Heart right ventricle (tissue), 16 donors: ENCODE measurements at regions of chr7 and their contacts with region 1.

Region 1: DNA sequence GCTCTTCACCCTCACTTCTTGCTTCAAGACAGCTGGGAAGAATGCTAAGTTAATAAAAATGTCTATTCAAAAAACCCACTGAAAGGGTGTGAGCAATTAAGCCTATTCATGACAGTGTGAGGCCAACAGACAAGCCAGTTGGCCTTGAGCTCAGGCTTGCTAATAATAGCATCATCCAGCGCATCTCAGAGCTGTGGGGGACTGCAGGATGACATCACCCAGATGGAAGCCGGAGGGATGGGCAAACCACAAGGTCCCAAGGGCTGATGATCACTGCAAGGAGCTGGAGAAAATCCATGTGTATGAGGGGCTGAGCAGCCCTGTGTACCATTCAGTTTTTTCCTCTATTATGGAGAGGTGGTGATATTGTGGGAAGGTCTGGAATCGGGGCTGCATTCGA is 770.4 kb downstream of the TNS3 start:
- DNase-seq: peak; percentile 19 to 72
- ATAC-seq: peak; percentile 89 to 97 (median 94)
- H3K4me3 ChIP-seq: no peak overlapping the region
- H3K27ac ChIP-seq: peak overlapping the region in 6 of 10 donors; percentile 32 to 67 (median 52)
- H3K4me1 ChIP-seq: peaks cover 0 to 37% (median 13%) of the 10 kb centered on the region in 9 donors
- H3K27me3 ChIP-seq: no peaks in the 10 kb centered on the region
- CTCF ChIP-seq: no peak

Region 2: DNA sequence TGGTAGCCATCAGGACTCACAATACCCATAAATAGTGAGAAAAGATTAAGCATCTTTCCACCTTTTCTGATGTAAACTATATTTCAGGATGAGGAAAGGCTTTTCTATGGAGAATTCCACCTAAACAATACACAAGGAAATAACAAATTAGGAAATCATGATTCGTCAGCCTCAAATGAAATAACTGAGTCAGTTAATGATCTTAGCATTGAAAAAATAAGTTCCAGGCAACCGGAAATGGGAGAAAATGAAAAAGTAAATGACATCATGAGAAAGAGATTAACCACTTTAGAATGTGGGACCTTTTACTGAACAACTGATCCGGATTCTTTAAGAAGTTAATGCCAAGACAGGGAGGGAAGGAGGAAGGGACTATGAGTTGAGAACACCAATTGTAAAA is 28.1 kb after region 1 on chr7:
- intact Hi-C with region 1: loop called in 1 of 10 experiments (anchors 1 kb)
- DNase-seq: no peak
- ATAC-seq: no peak
- H3K4me3 ChIP-seq: no peak overlapping the region
- H3K27ac ChIP-seq: no peak overlapping the region
- H3K4me1 ChIP-seq: peaks cover 0 to 4% (median 0%) of the 10 kb centered on the region in 9 donors
- H3K27me3 ChIP-seq: no peaks in the 10 kb centered on the region
- CTCF ChIP-seq: no peak

Region 3: GRCh38 chr7:46859963-46860475 is 48.5 kb after region 1 on chr7:
- intact Hi-C with region 1: no loop called
- DNase-seq: peak in 1 of 2 donors; percentile 32
- ATAC-seq: peak; percentile 23 to 83 (median 62)
- H3K4me3 ChIP-seq: no peak overlapping the region
- H3K27ac ChIP-seq: peak overlapping the region in 1 of 10 donors; percentile 31
- H3K4me1 ChIP-seq: peaks cover 0 to 6% (median 0%) of the 10 kb centered on the region in 9 donors
- H3K27me3 ChIP-seq: no peaks in the 10 kb centered on the region
- CTCF ChIP-seq: no peak

Region 4: DNA sequence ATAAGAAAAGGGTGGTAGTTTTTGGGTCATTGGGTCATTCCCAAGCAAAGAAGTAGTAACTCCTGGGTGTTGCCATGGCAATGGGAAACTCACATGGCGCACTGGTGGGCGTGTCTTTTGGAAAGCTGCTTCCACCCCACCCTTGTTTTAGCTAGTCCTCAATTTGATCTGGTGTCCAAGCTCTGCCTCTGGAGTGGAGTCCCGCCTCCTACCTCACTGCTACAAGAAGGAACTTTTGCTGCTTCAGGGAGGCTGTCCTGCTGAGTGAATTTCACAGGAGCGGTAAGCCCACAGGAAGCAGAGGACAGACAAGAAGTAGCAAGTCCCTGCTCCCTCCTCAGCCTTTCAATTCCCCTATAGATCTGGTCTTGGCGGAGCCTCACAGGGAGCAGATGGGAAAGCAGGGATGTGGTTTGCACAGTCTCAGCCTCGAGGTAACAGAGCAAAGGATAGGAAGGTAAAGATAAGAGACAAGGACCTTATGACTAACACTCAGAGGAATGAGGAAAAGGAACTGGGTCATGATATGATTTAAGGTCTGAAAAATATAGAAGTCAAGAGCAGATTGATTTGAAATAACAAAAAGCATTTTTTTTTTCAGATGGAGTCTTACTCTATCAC is 70.1 kb after region 1 on chr7:
- intact Hi-C with region 1: no loop called
- DNase-seq: no peak
- ATAC-seq: no peak
- H3K4me3 ChIP-seq: no peak overlapping the region
- H3K27ac ChIP-seq: no peak overlapping the region
- H3K4me1 ChIP-seq: peaks cover 0 to 3% (median 0%) of the 10 kb centered on the region in 9 donors
- H3K27me3 ChIP-seq: no peaks in the 10 kb centered on the region
- CTCF ChIP-seq: no peak

Region 5: DNA sequence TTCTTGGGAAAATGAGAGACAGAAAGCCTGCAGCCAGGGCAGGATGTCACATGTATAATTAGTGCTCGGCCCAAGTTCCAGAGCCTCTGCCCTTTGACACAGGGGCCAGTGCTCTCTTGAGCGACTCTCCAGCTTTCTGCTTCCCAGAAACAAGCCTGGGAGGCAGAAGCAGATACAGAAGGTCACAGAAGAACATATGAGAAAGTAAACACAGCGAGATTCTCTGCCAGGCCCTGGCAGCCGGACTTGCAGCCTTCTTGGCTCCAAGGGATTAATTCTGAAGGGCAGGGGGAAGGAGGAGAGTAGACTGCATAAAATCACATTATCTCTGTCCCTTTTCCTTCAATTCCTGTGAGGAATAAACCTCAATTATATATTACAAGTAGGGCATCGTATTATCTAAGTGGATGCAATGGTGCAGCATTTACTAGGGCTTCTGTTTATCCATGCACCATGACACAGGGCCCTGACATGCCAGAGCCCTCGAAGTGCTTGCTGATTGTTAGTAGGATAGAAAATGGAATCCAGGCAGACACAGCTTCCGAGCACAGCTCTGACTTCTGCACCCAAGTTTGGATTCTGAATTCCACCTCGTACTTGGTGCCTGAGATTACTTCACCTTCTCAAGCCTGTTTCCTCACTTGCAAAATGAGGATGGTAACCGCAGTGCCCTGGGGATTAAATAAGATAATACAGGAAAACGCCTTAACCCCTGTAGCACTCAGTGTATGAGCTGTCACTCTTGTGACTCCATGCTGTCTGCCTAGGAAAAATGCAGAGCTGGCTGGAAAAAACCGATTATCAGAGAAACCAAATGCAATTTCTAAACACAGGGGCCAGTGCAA is 233.9 kb after region 1 on chr7:
- intact Hi-C with region 1: loop called in 1 of 10 experiments (anchors 10 kb)
- DNase-seq: peak; percentile 60 to 63
- ATAC-seq: peak; percentile 52 to 87 (median 85)
- H3K4me3 ChIP-seq: no peak overlapping the region
- H3K27ac ChIP-seq: peak overlapping the region; percentile 25 to 80 (median 50)
- H3K4me1 ChIP-seq: peaks cover 5 to 67% (median 44%) of the 10 kb centered on the region in 9 donors
- H3K27me3 ChIP-seq: no peaks in the 10 kb centered on the region
- CTCF ChIP-seq: no peak